HCT116 (cell line): ENCODE measurements at regions of chr1 and their contacts with region 1.

Region 1: DNA sequence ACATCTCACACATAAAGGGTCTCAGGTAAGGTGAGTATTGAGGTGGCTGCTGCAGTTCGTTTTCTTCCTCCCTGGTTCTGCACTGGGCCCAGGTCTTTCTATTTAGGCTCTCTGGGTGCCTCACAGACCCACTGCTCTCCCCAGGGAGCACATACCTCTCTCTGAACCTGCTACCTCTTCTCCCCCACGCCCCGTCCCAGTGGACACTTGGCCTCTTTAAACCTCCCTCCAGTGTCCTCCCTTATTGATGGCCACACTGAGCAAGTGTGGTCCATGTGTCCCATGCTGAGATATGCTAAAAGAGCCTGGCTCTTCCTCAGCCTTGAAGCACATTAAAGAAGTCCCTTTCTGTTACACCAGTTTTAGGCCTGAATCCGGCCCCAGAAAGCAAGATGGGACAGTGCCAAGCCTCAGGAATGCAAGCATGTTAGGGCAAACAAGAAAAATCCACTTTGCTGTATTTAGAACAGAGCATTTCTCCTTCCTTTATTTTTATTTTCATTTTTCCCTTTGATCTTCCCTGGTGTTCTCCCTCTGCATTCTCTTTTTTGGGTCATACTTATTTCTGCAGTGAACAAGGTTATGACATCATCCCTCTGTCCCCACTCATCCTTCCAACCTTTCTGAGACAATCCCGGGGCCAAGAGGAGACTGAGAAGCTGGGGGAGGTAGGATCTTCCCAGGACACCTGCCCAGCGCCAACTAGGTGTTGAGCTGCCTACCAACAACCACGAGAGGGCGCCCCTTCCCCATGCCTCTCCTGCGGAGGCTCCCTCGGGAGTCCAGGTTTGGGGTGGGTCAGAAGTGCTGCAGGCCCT is 5.0 kb upstream of the CHI3L2 start:
- DNase-seq: peak; percentile 70
- ATAC-seq: peak; percentile 100
- H3K4me3 ChIP-seq: no peak overlapping the region
- H3K27ac ChIP-seq: no peak overlapping the region
- H3K4me1 ChIP-seq: peaks cover 3 to 5% of the 10 kb centered on the region in 2 experiments; a peak in 2 of 4 replicates
- H3K27me3 ChIP-seq: no peaks in the 10 kb centered on the region
- CTCF ChIP-seq: peak; percentile 90 to 98 (median 95)
- POLR2A ChIP-seq: no peak
- RAD21 ChIP-seq: peak; percentile 98

Region 2: GRCh38 chr1:111334169-111334568 is 111.7 kb after region 1 on chr1:
- CTCF ChIA-PET with region 1: interaction called, 36 read pairs
- POLR2A ChIA-PET with region 1: no interaction called
- RAD21 ChIA-PET with region 1: interaction called, 10 to 11 read pairs
- intact Hi-C with region 1: loop called (anchors 1 kb)
- DNase-seq: peak; percentile 21
- ATAC-seq: peak; percentile 90
- H3K4me3 ChIP-seq: no peak overlapping the region
- H3K27ac ChIP-seq: no peak overlapping the region
- H3K4me1 ChIP-seq: no peaks in the 10 kb centered on the region
- H3K27me3 ChIP-seq: no peaks in the 10 kb centered on the region
- CTCF ChIP-seq: peak; percentile 63 to 81 (median 75)
- POLR2A ChIP-seq: no peak
- RAD21 ChIP-seq: peak; percentile 89

Region 3: DNA sequence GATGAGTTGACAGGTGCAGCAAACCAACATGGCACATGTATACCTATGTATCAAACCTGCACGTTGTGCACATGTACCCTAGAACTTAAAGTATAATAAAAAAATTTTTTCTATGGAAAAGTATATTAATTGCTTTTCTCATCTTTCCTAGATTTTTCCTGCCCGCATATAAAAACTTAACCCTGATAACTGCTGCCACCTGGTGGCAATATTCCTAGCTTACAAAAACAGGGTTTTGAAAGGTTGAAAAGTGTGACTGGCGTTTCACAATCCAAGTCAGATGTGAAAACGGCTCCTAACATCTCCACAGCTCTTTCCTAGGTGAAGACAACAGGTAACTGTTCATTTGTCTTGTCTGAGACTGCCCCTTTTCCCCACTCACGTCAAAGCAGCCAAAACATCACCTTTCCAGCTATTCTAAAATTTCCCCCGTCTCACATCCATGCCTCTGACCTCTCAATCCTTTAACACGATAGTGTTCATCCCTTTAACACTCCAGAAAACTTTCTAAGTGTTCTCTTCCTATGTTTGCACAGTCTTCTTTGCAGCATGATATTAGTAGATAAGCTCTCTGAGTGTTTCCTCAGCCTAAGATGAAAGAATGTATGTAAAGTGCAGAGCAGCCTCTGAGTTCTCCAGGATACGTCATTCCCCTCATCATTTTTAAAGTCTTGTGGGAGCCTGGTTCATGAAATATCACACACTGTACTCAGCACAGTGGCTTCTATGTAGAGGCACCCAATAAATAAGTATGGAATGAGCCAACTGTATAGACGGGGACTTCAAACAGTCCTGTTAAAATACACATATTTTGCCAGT is 177.5 kb after region 1 on chr1:
- CTCF ChIA-PET with region 1: interaction called, 21 read pairs
- POLR2A ChIA-PET with region 1: no interaction called
- RAD21 ChIA-PET with region 1: interaction called, 8 read pairs
- intact Hi-C with region 1: loop called (anchors 1 kb)
- DNase-seq: peak; percentile 33
- ATAC-seq: peak; percentile 57; the same call in 1 of the 2 replicates
- H3K4me3 ChIP-seq: no peak overlapping the region
- H3K27ac ChIP-seq: no peak overlapping the region
- H3K4me1 ChIP-seq: no peaks in the 10 kb centered on the region
- H3K27me3 ChIP-seq: peaks cover 10% of the 10 kb centered on the region
- CTCF ChIP-seq: peak; percentile 54 to 64 (median 55)
- POLR2A ChIP-seq: no peak
- RAD21 ChIP-seq: peak; percentile 71

Region 4: DNA sequence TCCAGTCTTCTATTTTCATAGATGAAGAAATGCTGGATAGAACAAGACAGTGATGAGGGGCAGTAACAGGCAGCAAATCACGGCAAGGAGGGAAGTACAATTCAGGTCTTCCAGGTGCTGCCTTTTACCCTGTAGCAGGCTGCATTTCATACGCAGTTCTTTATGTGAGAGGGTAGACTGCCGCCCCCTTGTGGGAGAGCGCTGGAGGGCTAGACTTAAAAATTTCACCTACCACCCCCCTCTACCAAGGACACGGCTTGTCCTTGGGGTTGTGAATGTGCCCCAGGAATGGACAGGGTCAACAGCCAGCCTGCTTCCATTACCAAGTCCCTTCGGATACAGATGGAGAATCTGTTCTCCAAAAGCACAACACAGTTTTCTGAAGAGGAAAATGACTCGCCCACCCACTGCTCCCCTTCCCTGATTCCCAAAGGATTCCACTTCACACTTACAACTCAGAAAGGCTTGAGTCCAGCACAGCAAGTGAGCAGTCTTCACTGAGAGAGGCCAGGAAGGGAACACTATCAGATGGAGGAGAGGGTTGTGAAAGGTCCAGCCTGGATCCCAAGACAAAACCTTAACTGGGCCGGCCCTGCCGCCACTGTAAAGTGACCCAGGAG is 219.2 kb after region 1 on chr1:
- CTCF ChIA-PET with region 1: interaction called, 4 read pairs
- POLR2A ChIA-PET with region 1: no interaction called
- RAD21 ChIA-PET with region 1: no interaction called
- intact Hi-C with region 1: loop called (anchors 2 kb)
- DNase-seq: no peak
- ATAC-seq: peak; percentile 86
- H3K4me3 ChIP-seq: no peak overlapping the region
- H3K27ac ChIP-seq: no peak overlapping the region
- H3K4me1 ChIP-seq: peaks cover 0 to 6% of the 10 kb centered on the region in 2 experiments; a peak in 1 of 4 replicates
- H3K27me3 ChIP-seq: no peaks in the 10 kb centered on the region
- CTCF ChIP-seq: peak; percentile 24 to 73 (median 70); a peak in 5 of 6 replicates
- POLR2A ChIP-seq: no peak
- RAD21 ChIP-seq: peak; percentile 28; the same call in 1 of the 2 replicates